ENCODE measurements at regions of chr7 and their contacts with region 1.

Region 1: GRCh38 chr7:149624419-149625339 is 127.1 kb upstream of the ZNF746 start:
- DNase-seq: peak; percentile 96
- H3K4me3 ChIP-seq: peak overlapping the region; percentile 96
- H3K27ac ChIP-seq: peak overlapping the region; percentile 90
- H3K4me1 ChIP-seq: peaks cover 33% of the 10 kb centered on the region
- H3K27me3 ChIP-seq: no peaks in the 10 kb centered on the region
- CTCF ChIP-seq: peak; percentile 76

Region 2: DNA sequence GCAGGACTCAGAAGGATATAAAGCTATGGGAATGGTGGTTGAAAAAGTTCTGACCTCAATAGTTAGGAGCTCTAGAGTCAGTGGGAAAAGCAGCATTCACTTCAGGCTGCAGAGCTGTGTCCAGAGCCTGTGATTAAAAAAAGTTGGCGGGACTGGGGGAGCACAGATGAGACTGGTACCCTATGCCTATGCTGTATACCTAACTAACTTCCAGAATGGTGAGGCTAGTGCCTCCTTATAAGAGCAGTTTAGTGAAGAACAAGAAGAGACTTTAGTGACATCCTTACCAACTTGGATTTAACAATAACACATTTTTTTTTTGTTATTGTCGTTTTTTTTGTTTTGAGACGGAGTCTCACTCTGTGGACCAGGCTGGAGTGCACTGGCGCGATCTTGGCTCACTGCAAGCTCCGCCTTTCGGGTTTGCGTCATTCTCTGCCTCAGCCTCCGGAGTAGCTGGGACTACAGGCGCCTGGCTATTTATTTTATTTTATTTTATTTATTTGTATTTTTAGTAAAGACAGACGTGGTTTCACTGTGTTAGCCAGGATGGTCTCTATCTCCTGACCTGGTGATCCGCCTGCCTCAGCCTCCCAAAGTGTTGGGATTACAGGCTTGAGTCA is 435.9 kb before region 1 on chr7:
- CTCF ChIA-PET with region 1: no interaction called
- POLR2A ChIA-PET with region 1: interaction called, 14 read pairs
- intact Hi-C with region 1: no loop called
- DNase-seq: no peak
- H3K4me3 ChIP-seq: no peak overlapping the region
- H3K27ac ChIP-seq: no peak overlapping the region
- H3K4me1 ChIP-seq: no peaks in the 10 kb centered on the region
- H3K27me3 ChIP-seq: no peaks in the 10 kb centered on the region
- CTCF ChIP-seq: no peak

Region 3: GRCh38 chr7:149261829-149262617 is 362.7 kb before region 1 on chr7 and contains the start of gene ZNF783:
- CTCF ChIA-PET with region 1: no interaction called
- POLR2A ChIA-PET with region 1: no interaction called
- intact Hi-C with region 1: loop called (anchors 10 kb)
- DNase-seq: peak; percentile 91
- H3K4me3 ChIP-seq: peak within 1 kb of the TSS; percentile 59
- H3K27ac ChIP-seq: peak within 1 kb of the TSS; percentile 83
- H3K4me1 ChIP-seq: no peaks in the 10 kb centered on the region
- H3K27me3 ChIP-seq: no peaks in the 10 kb centered on the region
- CTCF ChIP-seq: peak; percentile 57
- total RNA-seq, gene ZNF783: 10.8 and 11.3 TPM in 2 replicates